Endothelial cell of umbilical vein (primary cell): ENCODE measurements at regions of chr4 and their contacts with region 1.

Region 1: GRCh38 chr4:80221161-80221560 is 23.9 kb downstream of the PRDM8 start:
- DNase-seq: no peak
- H3K4me3 ChIP-seq: no peak overlapping the region
- H3K27ac ChIP-seq: no peak overlapping the region
- H3K4me1 ChIP-seq: no peaks in the 10 kb centered on the region
- H3K27me3 ChIP-seq: peaks cover 23 to 52% of the 10 kb centered on the region in 2 experiments
- CTCF ChIP-seq: peak in 1 of 2 donors; percentile 27
- POLR2A ChIP-seq: no peak

Region 2: GRCh38 chr4:78951862-78952472 is 1269.2 kb before region 1 on chr4:
- CTCF ChIA-PET with region 1: interaction called, 19 read pairs
- POLR2A ChIA-PET with region 1: no interaction called
- dilution Hi-C with region 1: no loop called
- intact Hi-C with region 1: no loop called
- DNase-seq: peak; percentile 42
- H3K4me3 ChIP-seq: no peak overlapping the region
- H3K27ac ChIP-seq: no peak overlapping the region
- H3K4me1 ChIP-seq: no peaks in the 10 kb centered on the region
- H3K27me3 ChIP-seq: peaks cover 5 to 9% of the 10 kb centered on the region in 2 experiments
- CTCF ChIP-seq: peak; percentile 47 to 50
- POLR2A ChIP-seq: no peak

Region 3: GRCh38 chr4:80208610-80209339 is 12.4 kb before region 1 on chr4:
- CTCF ChIA-PET with region 1: interaction called, 17 read pairs
- POLR2A ChIA-PET with region 1: no interaction called
- dilution Hi-C with region 1: no loop called
- intact Hi-C with region 1: no loop called
- DNase-seq: no peak
- H3K4me3 ChIP-seq: no peak overlapping the region
- H3K27ac ChIP-seq: no peak overlapping the region
- H3K4me1 ChIP-seq: peaks cover 5% of the 10 kb centered on the region
- H3K27me3 ChIP-seq: peaks cover 0 to 4% of the 10 kb centered on the region in 2 experiments
- CTCF ChIP-seq: no peak
- POLR2A ChIP-seq: no peak

Region 4: GRCh38 chr4:80237992-80238391 is 16.8 kb after region 1 on chr4:
- CTCF ChIA-PET with region 1: interaction called, 25 read pairs
- POLR2A ChIA-PET with region 1: no interaction called
- dilution Hi-C with region 1: no loop called
- intact Hi-C with region 1: no loop called
- DNase-seq: peak; percentile 77
- H3K4me3 ChIP-seq: no peak overlapping the region
- H3K27ac ChIP-seq: peak overlapping the region; percentile 88
- H3K4me1 ChIP-seq: peaks cover 43% of the 10 kb centered on the region
- H3K27me3 ChIP-seq: no peaks in the 10 kb centered on the region
- CTCF ChIP-seq: no peak
- POLR2A ChIP-seq: no peak

Region 5: DNA sequence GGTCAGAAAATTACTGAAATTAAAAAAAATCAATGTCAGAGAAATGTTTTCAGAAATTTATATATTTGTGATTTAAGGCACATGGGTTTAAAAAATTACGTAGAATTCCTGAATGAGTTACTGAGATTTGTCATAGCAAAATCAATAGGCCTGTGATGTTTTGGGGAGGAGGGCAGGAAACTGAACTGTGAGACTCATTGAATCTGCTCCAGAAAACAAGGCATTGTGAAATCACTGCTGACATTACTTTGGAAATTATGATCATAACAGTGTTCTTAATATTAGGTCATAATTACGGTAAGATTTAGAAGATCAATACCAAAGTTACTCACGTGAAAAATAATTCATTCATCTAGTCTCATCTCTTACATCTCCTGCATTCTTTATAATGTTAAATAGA is 50.6 kb after region 1 on chr4:
- CTCF ChIA-PET with region 1: interaction called, 36 read pairs
- POLR2A ChIA-PET with region 1: no interaction called
- dilution Hi-C with region 1: no loop called
- intact Hi-C with region 1: loop called (anchors 5 kb)
- DNase-seq: no peak
- H3K4me3 ChIP-seq: no peak overlapping the region
- H3K27ac ChIP-seq: no peak overlapping the region
- H3K4me1 ChIP-seq: peaks cover 4% of the 10 kb centered on the region
- H3K27me3 ChIP-seq: peaks cover 32 to 72% of the 10 kb centered on the region in 2 experiments
- CTCF ChIP-seq: no peak
- POLR2A ChIP-seq: no peak

Region 6: DNA sequence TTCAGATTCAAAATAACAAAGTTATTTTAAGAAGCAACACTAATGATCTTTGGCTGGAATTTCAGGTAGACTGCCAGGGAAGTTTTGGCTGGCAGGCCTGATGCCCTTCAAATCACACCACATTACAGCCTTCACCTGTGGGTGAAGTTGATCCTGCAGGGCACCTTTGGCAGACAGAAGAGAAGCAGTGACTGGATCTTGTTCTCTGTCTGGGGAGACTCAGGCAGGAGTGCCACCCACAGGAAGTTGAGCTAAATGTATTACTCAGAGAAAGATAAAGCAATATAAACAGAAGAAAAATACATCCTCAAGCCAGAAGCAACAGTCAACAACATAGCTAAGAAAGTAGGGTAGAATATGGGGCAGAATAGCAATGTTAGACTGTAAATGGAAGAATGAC is 101.6 kb after region 1 on chr4:
- CTCF ChIA-PET with region 1: interaction called, 56 read pairs
- POLR2A ChIA-PET with region 1: no interaction called
- dilution Hi-C with region 1: no loop called
- intact Hi-C with region 1: no loop called
- DNase-seq: peak; percentile 24
- H3K4me3 ChIP-seq: no peak overlapping the region
- H3K27ac ChIP-seq: no peak overlapping the region
- H3K4me1 ChIP-seq: no peaks in the 10 kb centered on the region
- H3K27me3 ChIP-seq: no peaks in the 10 kb centered on the region
- CTCF ChIP-seq: no peak
- POLR2A ChIP-seq: no peak

Region 7: DNA sequence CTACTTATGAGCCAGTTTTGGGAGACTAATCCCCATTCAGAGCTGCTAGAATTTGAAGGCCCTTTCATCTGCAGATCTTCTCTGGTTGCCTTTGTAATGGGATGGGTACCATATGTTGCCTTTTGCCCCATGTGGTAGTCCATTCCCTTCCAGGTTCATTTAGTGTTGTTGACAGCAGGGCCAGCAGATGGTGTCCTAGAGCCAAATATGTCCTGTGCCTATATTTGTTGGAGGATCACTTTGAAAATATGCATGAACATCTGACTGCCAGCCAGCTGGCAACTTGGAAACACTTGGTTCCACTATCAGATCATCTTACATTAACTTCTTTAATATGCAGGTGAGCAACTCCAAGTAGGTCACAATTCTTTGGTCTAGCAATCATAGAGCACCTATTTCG is 144.8 kb after region 1 on chr4:
- CTCF ChIA-PET with region 1: interaction called, 10 read pairs
- POLR2A ChIA-PET with region 1: no interaction called
- dilution Hi-C with region 1: no loop called
- intact Hi-C with region 1: no loop called
- DNase-seq: peak; percentile 23
- H3K4me3 ChIP-seq: no peak overlapping the region
- H3K27ac ChIP-seq: no peak overlapping the region
- H3K4me1 ChIP-seq: no peaks in the 10 kb centered on the region
- H3K27me3 ChIP-seq: peaks cover 0 to under 1% of the 10 kb centered on the region in 2 experiments
- CTCF ChIP-seq: peak; percentile 41 to 54
- POLR2A ChIP-seq: no peak

Region 8: GRCh38 chr4:81136161-81136905 is 915.2 kb after region 1 on chr4:
- CTCF ChIA-PET with region 1: no interaction called
- POLR2A ChIA-PET with region 1: no interaction called
- dilution Hi-C with region 1: no loop called
- intact Hi-C with region 1: no loop called
- DNase-seq: no peak
- H3K4me3 ChIP-seq: no peak overlapping the region
- H3K27ac ChIP-seq: no peak overlapping the region
- H3K4me1 ChIP-seq: no peaks in the 10 kb centered on the region
- H3K27me3 ChIP-seq: no peaks in the 10 kb centered on the region
- CTCF ChIP-seq: no peak
- POLR2A ChIP-seq: no peak